ENCODE measurements at regions of chr3 and their contacts with region 1.

Region 1: DNA sequence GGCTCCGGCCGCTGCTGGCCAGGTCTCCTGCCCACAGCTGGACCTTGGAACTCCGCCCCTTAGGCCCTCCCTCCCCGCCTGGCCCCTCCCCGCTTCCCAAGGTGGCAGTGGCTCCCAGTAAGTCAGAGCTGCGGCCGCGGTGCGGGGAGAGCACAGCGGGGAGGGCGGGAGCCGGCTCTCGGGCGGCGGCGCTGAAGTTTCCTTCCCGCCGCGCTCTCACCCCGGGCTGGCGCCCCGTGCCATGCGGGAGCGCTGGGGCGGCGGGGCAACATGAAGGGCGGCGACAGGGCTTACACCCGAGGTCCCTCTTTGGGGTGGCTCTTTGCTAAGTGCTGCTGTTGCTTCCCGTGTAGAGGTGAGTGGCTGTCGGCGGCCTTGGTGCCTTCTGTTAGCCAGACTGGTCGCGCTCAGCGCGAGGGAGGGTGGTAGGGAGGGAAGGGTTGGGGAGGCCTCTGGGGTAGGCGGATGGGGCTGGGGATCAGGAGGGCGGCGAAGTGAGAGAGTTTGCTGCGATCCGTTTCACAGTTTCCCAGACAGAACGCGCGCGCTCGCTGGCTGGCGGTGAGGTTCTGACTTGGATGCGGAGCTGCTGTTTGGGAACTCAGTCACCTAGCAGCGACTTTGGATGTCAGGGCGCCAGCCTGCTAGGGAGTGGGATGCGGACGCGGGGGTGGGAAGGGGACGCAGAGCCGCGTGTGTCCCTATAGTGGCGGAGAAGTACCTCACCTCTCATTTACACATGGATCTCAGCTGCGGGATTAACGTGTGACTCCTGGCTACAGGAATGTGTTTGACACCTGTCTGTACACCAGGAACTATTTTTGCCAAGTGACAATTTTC is 145.5 kb upstream of the UMPS start:
- DNase-seq: peak; percentile 79 to 85
- ATAC-seq: peak; percentile 88 to 95 (median 92)
- H3K4me3 ChIP-seq: peak overlapping the region; percentile 32 to 70 (median 65)
- H3K27ac ChIP-seq: peak overlapping the region; percentile 61 to 91 (median 84)
- H3K4me1 ChIP-seq: peaks cover 0 to 45% (median 27%) of the 10 kb centered on the region in 9 donors
- H3K27me3 ChIP-seq: peaks cover 0 to 43% (median 0%) of the 10 kb centered on the region in 7 donors
- CTCF ChIP-seq: peak in 1 of 9 donors; percentile 4

Region 2: GRCh38 chr3:124168262-124168661 is 416.5 kb before region 1 on chr3:
- intact Hi-C with region 1: no loop called
- DNase-seq: peak in 1 of 2 donors; percentile 40
- ATAC-seq: peak; percentile 48 to 84 (median 73)
- H3K4me3 ChIP-seq: no peak overlapping the region
- H3K27ac ChIP-seq: no peak overlapping the region
- H3K4me1 ChIP-seq: peaks cover 0 to 28% (median 0%) of the 10 kb centered on the region in 9 donors
- H3K27me3 ChIP-seq: no peaks in the 10 kb centered on the region
- CTCF ChIP-seq: no peak

Region 3: GRCh38 chr3:124650798-124651197 is 66.0 kb after region 1 on chr3:
- intact Hi-C with region 1: no loop called
- DNase-seq: no peak
- ATAC-seq: no peak
- H3K4me3 ChIP-seq: no peak overlapping the region
- H3K27ac ChIP-seq: no peak overlapping the region
- H3K4me1 ChIP-seq: peaks cover 4 to 56% (median 24%) of the 10 kb centered on the region in 9 donors
- H3K27me3 ChIP-seq: no peaks in the 10 kb centered on the region
- CTCF ChIP-seq: no peak

Region 4: DNA sequence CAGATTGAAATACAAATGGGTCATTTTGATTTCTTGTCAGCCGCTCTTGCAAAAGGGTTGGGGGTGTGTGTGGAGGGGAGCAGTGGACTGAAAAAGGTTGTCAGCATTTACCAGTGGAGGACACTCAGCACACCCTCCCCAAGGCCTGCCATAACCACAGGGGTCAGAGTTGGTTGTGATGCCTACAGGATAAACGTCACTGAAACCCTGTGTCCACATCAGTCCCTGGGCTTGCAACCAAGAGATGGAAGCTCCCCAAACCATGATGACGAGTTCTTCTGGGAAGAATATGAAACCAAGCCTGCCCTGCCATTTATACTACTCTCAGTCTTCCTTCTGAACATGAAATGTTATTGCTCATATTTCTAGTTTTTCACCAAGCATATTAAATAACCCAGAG is 91.5 kb after region 1 on chr3:
- intact Hi-C with region 1: loop called in 2 of 10 experiments (anchors 5 kb)
- DNase-seq: no peak
- ATAC-seq: peak in 1 of 8 donors; percentile 36
- H3K4me3 ChIP-seq: no peak overlapping the region
- H3K27ac ChIP-seq: no peak overlapping the region
- H3K4me1 ChIP-seq: peaks cover 0 to 11% (median 0%) of the 10 kb centered on the region in 9 donors
- H3K27me3 ChIP-seq: no peaks in the 10 kb centered on the region
- CTCF ChIP-seq: no peak

Measured in heart right ventricle (tissue), 16 donors.